BJ (cell line): ENCODE measurements at regions of chr7 and their contacts with region 1.

Region 1: DNA sequence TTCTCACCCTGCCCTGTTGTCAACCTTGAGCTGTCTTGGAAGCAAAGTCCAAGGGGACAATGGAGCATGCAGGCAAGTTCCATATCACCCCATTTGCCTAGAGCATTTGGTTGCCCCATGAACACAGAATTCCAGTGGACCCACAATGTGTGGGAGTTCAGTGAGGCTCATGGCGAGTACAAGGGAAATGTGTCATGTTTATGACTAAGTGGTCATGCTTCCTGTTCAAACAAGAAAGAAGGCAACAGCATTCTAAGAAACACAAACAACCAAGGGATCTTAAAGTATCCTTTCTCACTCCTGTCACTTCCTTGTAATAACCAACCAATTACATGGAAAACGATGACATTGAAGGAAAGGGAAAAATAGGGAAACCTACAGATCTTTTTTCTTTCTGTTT is 513.0 kb downstream of the INHBA start:
- DNase-seq: peak; percentile 58
- H3K4me3 ChIP-seq: no peak overlapping the region
- H3K27me3 ChIP-seq: no peaks in the 10 kb centered on the region
- CTCF ChIP-seq: no peak

Region 2: GRCh38 chr7:41203542-41203941 is 13.7 kb after region 1 on chr7:
- CTCF ChIA-PET with region 1: interaction called, 11 read pairs
- POLR2A ChIA-PET with region 1: no interaction called
- DNase-seq: no peak
- H3K4me3 ChIP-seq: no peak overlapping the region
- H3K27me3 ChIP-seq: no peaks in the 10 kb centered on the region; the same call in 1 of the 2 replicates
- CTCF ChIP-seq: no peak

Region 3: DNA sequence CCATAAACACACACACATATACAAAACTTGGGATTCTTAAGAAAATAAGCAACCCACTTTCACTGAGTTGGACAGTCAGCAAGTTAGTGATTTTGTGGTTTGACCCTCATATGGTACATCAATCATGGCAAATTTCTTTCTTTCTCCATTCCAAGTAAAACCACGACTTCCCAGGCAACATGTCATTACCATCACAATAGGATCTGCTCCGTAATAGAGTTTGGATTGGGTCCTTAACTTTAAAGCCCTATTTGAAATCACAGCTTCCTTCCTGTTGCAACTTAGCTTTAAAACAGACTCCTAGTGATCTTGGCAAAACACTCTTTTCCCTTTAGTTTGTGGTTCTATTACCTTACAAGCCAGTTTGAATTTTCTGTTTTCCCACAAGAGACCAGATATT is 29.4 kb after region 1 on chr7:
- CTCF ChIA-PET with region 1: no interaction called
- POLR2A ChIA-PET with region 1: no interaction called
- DNase-seq: no peak
- H3K4me3 ChIP-seq: no peak overlapping the region
- H3K27me3 ChIP-seq: no peaks in the 10 kb centered on the region
- CTCF ChIP-seq: no peak